ENCODE measurements at regions of chr21 and their contacts with region 1.

Region 1: DNA sequence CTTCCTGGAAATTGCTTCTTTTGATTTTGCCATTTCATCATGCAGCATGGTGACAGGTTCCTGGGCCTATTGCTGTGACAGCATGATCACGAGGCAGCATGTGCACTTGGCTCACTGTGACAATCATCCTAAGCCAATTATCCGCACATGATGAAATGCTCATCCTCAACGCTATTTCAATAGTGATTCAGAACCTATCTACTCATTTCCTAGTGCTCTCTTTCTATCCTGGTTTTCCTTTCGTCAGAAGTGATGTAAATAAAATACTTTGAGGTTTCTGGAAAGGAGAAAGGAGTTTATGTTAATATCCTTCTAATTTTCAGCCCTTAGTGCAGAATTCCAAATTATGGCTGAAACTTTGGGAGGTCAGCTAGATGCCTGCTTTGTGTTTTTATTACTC is 110.6 kb upstream of the ADAMTS5 start:
- DNase-seq: no peak
- ATAC-seq: no peak
- H3K4me3 ChIP-seq: no peak overlapping the region
- H3K4me3 Mint-ChIP-seq: no peak overlapping the region
- H3K27ac ChIP-seq: no peak overlapping the region
- H3K27ac Mint-ChIP-seq: no peak overlapping the region
- H3K4me1 ChIP-seq: no peaks in the 10 kb centered on the region
- H3K4me1 Mint-ChIP-seq: no peaks in the 10 kb centered on the region
- H3K27me3 ChIP-seq: no peaks in the 10 kb centered on the region
- H3K27me3 Mint-ChIP-seq: no peaks in the 10 kb centered on the region
- CTCF ChIP-seq: no peak

Region 2: DNA sequence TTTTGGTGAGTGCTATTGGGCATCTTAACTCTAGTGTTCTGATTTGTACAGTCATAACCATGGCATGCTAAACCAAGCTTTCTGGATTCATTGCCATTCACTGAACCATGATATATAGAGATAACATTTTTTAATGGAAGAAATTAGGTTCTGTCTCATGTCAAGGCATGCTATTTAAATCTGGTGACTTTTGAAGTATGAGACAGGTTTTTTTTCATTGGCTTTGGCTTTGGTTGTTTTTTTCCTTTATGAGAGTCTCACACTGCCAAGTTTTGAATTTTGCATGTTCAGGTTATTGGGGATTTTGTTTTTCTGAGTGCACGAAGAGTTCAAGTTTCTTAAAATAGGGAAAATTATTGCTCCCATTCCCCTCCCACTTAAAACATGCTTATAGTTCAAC is 30.7 kb after region 1 on chr21:
- CTCF ChIA-PET with region 1: no interaction called
- POLR2A ChIA-PET with region 1: no interaction called
- intact Hi-C with region 1: no loop called
- DNase-seq: no peak
- ATAC-seq: no peak
- H3K4me3 ChIP-seq: no peak overlapping the region
- H3K4me3 Mint-ChIP-seq: no peak overlapping the region
- H3K27ac ChIP-seq: no peak overlapping the region
- H3K27ac Mint-ChIP-seq: no peak overlapping the region
- H3K4me1 ChIP-seq: no peaks in the 10 kb centered on the region
- H3K4me1 Mint-ChIP-seq: no peaks in the 10 kb centered on the region
- H3K27me3 ChIP-seq: no peaks in the 10 kb centered on the region
- H3K27me3 Mint-ChIP-seq: no peaks in the 10 kb centered on the region
- CTCF ChIP-seq: no peak

Region 3: GRCh38 chr21:27122686-27123085 is 45.2 kb after region 1 on chr21:
- CTCF ChIA-PET with region 1: no interaction called
- POLR2A ChIA-PET with region 1: no interaction called
- intact Hi-C with region 1: loop called (anchors 1 to 5 kb)
- DNase-seq: no peak
- ATAC-seq: no peak
- H3K4me3 ChIP-seq: no peak overlapping the region
- H3K4me3 Mint-ChIP-seq: no peak overlapping the region
- H3K27ac ChIP-seq: no peak overlapping the region
- H3K27ac Mint-ChIP-seq: no peak overlapping the region
- H3K4me1 ChIP-seq: no peaks in the 10 kb centered on the region
- H3K4me1 Mint-ChIP-seq: no peaks in the 10 kb centered on the region
- H3K27me3 ChIP-seq: no peaks in the 10 kb centered on the region
- H3K27me3 Mint-ChIP-seq: no peaks in the 10 kb centered on the region
- CTCF ChIP-seq: no peak

Region 4: DNA sequence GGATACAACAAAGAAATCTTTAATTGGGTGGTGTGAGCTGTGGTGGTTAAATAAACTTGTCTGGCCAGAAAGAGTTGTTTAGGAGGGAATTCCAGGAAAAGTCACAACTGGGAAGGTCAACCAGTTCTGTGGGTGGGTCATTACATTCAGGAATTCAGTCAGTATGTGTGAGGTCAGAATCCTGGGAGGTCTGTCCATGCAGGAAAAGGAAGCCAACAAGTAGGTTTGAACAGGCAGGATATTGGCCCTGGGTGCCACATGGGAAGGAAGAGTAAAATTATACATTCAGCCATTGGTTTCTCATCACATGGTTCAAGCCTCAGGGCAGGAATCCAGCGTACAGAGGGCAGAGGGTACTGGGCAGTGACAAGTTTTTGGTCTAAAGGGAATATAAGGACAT is 51.8 kb after region 1 on chr21:
- CTCF ChIA-PET with region 1: no interaction called
- POLR2A ChIA-PET with region 1: no interaction called
- intact Hi-C with region 1: loop called in 1 of 2 experiments (anchors 5 kb)
- DNase-seq: no peak
- ATAC-seq: no peak
- H3K4me3 ChIP-seq: no peak overlapping the region
- H3K4me3 Mint-ChIP-seq: no peak overlapping the region
- H3K27ac ChIP-seq: no peak overlapping the region
- H3K27ac Mint-ChIP-seq: no peak overlapping the region
- H3K4me1 ChIP-seq: no peaks in the 10 kb centered on the region
- H3K4me1 Mint-ChIP-seq: no peaks in the 10 kb centered on the region
- H3K27me3 ChIP-seq: no peaks in the 10 kb centered on the region
- H3K27me3 Mint-ChIP-seq: no peaks in the 10 kb centered on the region
- CTCF ChIP-seq: no peak